ENCODE measurements at regions of chr20 and their contacts with region 1.

Region 1: GRCh38 chr20:53939572-53940359 is 130.6 kb downstream of the BCAS1 start:
- DNase-seq: peak; percentile 95
- H3K4me3 ChIP-seq: no peak overlapping the region
- H3K27ac ChIP-seq: peak overlapping the region; percentile 53 to 71 (median 62)
- H3K4me1 ChIP-seq: peaks cover 0 to 38% (median 24%) of the 10 kb centered on the region in 4 donors
- H3K27me3 ChIP-seq: no peaks in the 10 kb centered on the region
- CTCF ChIP-seq: peak; percentile 59 to 68 (median 62)
- EP300 ChIP-seq: no peak
- POLR2A ChIP-seq: no peak

Region 2: GRCh38 chr20:53805895-53806384 is 133.8 kb before region 1 on chr20:
- intact Hi-C with region 1: no loop called
- DNase-seq: no peak
- H3K4me3 ChIP-seq: no peak overlapping the region
- H3K27ac ChIP-seq: no peak overlapping the region
- H3K4me1 ChIP-seq: peaks cover 0 to 14% (median 3%) of the 10 kb centered on the region in 4 donors
- H3K27me3 ChIP-seq: no peaks in the 10 kb centered on the region
- CTCF ChIP-seq: no peak
- EP300 ChIP-seq: no peak
- POLR2A ChIP-seq: no peak

Region 3: DNA sequence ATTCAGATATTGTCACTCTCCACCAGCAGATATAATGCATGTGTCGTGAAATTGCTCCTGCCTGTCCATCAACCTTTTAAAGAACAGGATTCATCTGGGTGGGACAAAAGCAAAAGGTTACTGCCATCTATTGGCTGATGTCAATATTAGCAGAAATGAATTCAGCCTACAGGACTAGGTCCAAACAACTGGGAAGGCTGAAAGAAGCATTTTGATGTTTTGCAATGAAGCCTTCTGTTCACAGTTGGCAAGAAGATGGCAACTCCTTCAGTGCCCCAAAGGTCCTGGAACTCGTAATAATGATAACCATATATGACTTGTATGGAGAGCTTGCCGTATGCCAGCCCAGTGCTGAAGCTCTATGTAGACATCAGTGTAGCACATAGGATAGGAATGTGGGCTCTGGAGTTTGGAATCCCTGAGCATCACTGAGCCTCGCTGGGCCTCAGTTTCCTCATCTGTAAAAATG is 123.1 kb after region 1 on chr20:
- intact Hi-C with region 1: loop called (anchors 10 kb)
- DNase-seq: no peak
- H3K4me3 ChIP-seq: no peak overlapping the region
- H3K27ac ChIP-seq: no peak overlapping the region
- H3K4me1 ChIP-seq: peaks cover 0 to 4% (median 0%) of the 10 kb centered on the region in 4 donors
- H3K27me3 ChIP-seq: no peaks in the 10 kb centered on the region
- CTCF ChIP-seq: peak in 3 of 4 experiments; percentile 33 to 44 (median 41)
- EP300 ChIP-seq: no peak
- POLR2A ChIP-seq: no peak

Region 4: DNA sequence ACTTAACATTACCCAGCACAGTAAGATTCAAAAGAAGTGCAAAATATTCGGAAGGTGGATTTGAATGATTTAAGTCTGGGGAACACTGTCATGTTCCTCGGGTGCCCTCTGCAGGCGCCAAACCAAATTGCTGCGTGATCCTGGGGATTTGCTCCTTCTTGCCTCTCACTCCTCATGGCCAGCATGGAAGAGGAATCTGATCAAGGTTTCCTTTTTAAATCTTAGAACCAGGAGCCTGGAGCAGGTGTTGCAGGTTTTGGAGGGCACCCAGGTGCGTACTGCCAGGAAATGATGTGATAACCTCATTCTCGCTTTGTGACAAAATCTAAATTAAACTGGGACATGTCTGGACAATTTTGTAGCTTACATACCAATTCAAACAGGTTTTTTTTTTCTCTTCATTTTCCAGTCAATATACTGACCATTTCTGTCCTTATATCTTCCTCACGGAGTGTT is 260.0 kb after region 1 on chr20:
- intact Hi-C with region 1: loop called (anchors 10 kb)
- DNase-seq: peak; percentile 78
- H3K4me3 ChIP-seq: no peak overlapping the region
- H3K27ac ChIP-seq: no peak overlapping the region
- H3K4me1 ChIP-seq: no peaks in the 10 kb centered on the region
- H3K27me3 ChIP-seq: no peaks in the 10 kb centered on the region
- CTCF ChIP-seq: peak; percentile 54 to 84 (median 71)
- EP300 ChIP-seq: no peak
- POLR2A ChIP-seq: no peak

Region 5: DNA sequence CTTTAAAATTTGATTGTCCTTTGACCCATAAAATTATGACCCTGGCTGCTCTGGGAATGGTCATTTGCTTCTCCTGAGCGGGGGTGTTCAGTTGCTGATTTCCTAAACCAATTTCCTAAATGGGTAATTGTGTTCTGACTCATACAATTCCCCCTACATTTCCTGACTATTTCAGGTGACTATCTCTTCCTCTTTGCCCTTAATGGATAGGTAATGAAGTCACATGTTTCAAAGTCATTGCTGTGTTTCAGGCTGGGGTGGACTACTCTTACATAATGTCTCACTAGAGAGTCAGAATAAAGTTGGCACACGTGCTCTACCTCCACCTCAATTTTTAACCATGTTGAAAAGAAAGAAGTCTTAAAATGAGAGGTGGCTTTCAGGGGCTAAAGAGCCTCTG is 645.5 kb after region 1 on chr20:
- intact Hi-C with region 1: no loop called
- DNase-seq: no peak
- H3K4me3 ChIP-seq: no peak overlapping the region
- H3K27ac ChIP-seq: no peak overlapping the region
- H3K4me1 ChIP-seq: no peaks in the 10 kb centered on the region
- H3K27me3 ChIP-seq: no peaks in the 10 kb centered on the region
- CTCF ChIP-seq: no peak
- EP300 ChIP-seq: no peak
- POLR2A ChIP-seq: no peak